ENCODE measurements at regions of chrX and their contacts with region 1.

Region 1: GRCh38 chrX:30570505-30570904 is 7.1 kb downstream of the TASL start:
- DNase-seq: peak in 3 of 4 experiments; percentile 17 to 21 (median 18)
- ATAC-seq: no peak
- H3K4me3 ChIP-seq: no peak overlapping the region
- H3K27ac ChIP-seq: no peak overlapping the region
- H3K4me1 ChIP-seq: no peaks in the 10 kb centered on the region
- H3K27me3 ChIP-seq: no peaks in the 10 kb centered on the region
- CTCF ChIP-seq: peak in 1 of 3 experiments; percentile 55; a peak in 3 of 6 replicates
- EP300 ChIP-seq: no peak
- POLR2A ChIP-seq: no peak
- RAD21 ChIP-seq: peak; percentile 39 to 49

Region 2: DNA sequence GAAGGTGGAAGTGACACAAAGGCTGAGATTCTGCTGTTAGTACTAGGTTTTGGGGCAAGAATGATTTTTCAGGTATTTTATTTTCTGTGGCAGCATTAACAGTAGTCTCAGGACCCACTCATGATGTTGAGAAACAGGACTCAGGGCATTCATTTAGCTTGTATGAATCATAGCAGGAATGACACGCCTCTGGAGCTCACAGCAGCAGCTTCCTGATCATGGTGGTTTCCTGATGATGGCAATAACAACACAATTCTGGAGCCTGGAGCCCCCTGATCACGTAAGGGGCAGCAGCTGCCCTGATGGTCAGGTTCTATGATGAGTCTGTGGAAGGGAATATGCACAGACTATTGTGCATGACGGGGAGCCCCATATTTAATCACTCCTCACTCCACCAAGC is 39.9 kb before region 1 on chrX:
- CTCF ChIA-PET with region 1: no interaction called
- POLR2A ChIA-PET with region 1: no interaction called
- in situ Hi-C with region 1: no loop called
- intact Hi-C with region 1: no loop called
- DNase-seq: no peak
- ATAC-seq: no peak
- H3K4me3 ChIP-seq: no peak overlapping the region
- H3K27ac ChIP-seq: no peak overlapping the region
- H3K4me1 ChIP-seq: no peaks in the 10 kb centered on the region
- H3K27me3 ChIP-seq: no peaks in the 10 kb centered on the region
- CTCF ChIP-seq: no peak
- EP300 ChIP-seq: no peak
- POLR2A ChIP-seq: no peak
- RAD21 ChIP-seq: no peak

Region 3: GRCh38 chrX:30618156-30618765 is 47.8 kb after region 1 on chrX:
- CTCF ChIA-PET with region 1: interaction called, 3 read pairs
- POLR2A ChIA-PET with region 1: no interaction called
- in situ Hi-C with region 1: no loop called
- intact Hi-C with region 1: loop called (anchors 2 kb)
- DNase-seq: peak in 3 of 4 experiments; percentile 4 to 7 (median 4)
- ATAC-seq: peak; percentile 61; the same call in 1 of the 3 replicates
- H3K4me3 ChIP-seq: no peak overlapping the region
- H3K27ac ChIP-seq: no peak overlapping the region
- H3K4me1 ChIP-seq: no peaks in the 10 kb centered on the region
- H3K27me3 ChIP-seq: no peaks in the 10 kb centered on the region
- CTCF ChIP-seq: peak in 2 of 3 experiments; percentile 16 to 45; a peak in 2 of 6 replicates
- EP300 ChIP-seq: no peak
- POLR2A ChIP-seq: no peak
- RAD21 ChIP-seq: peak in 1 of 2 experiments; percentile 29; a peak in 1 of 4 replicates

Measured in K562 (cell line).